ENCODE measurements at regions of chr6 and their contacts with region 1.

Region 1: DNA sequence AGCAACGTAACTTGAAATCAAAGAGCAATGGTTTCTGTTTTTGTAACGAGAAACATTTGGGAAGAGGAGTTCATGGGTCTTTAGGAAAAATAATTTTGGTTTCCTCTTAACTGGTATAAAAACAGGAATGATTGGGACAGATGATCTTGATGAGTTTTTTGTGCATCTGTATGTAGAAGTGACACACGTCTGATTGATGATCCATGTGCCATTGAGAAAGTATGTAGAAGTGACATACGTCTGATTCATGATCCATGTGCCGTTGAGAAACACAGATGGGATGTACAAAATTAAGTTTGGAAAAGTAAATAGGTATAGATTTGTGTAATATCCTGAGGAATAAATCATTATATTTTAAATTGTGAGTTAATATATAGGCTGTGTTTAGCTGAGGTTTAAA is 2.1 kb downstream of the KIAA1586 start:
- DNase-seq: no peak
- H3K4me3 Mint-ChIP-seq: peak overlapping the region; percentile 79
- H3K27ac Mint-ChIP-seq: peak overlapping the region; percentile 24
- H3K4me1 Mint-ChIP-seq: peaks cover 26% of the 10 kb centered on the region
- H3K27me3 Mint-ChIP-seq: peaks cover 20% of the 10 kb centered on the region

Region 2: DNA sequence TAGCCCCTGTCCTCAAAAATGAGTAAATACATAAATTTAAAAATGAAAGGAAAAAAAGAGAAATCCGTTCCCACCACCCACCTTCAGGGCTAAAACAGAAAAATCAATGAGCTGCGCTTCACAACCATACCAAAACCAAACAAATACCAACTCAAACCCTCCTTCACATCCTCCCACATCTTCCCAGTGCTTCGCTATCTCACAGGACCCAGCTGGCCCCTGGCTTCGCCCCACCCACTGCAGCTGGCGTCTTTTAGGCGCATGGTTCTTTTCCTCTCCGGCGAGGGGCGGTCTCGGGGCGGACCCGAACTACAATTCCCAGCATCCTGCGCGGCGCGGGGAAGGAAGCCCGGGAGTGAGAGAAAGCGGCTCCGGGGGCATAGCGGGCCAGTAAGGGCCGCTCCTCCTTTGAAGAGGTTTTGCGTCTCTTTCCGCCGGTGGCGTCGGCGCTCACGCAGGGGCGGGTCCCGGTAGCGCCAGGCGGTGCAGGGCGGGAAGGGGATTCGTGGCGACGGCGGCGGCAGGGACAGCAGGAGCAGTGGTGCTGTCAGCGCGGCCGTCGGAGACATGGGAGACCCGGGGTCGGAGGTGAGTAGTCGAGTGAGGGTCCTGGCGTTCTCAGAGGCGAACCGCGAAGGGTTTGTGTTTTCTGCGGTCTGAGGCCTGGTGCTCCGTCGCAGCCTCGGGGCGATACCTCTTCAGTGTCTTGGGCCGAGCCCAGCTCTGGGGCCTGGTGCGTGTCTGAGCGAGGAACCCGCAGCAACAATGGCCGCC is 41.3 kb after region 1 on chr6 and contains the start of gene ZNF451:
- intact Hi-C with region 1: loop called (anchors 1 kb)
- DNase-seq: peak; percentile 95
- H3K4me3 Mint-ChIP-seq: peak within 1 kb of the TSS; percentile 73
- H3K27ac Mint-ChIP-seq: peak within 1 kb of the TSS; percentile 81
- H3K4me1 Mint-ChIP-seq: peaks cover 36% of the 10 kb centered on the region
- H3K27me3 Mint-ChIP-seq: no peaks in the 10 kb centered on the region
- total RNA-seq, gene ZNF451: 57.7 and 60.3 TPM in 2 replicates